Activated CD4-positive, alpha-beta memory T cell treated with anti-CD3 and anti-CD28 coated beads for 36 hours (primary cell): ENCODE measurements at regions of chr1 and their contacts with region 1.

Region 1: GRCh38 chr1:244272471-244273261 is 179.0 kb downstream of the ADSS2 start:
- DNase-seq: peak; percentile 80
- H3K4me3 Mint-ChIP-seq: no peak overlapping the region
- H3K27ac Mint-ChIP-seq: no peak overlapping the region
- H3K4me1 Mint-ChIP-seq: peaks cover 5% of the 10 kb centered on the region
- H3K27me3 Mint-ChIP-seq: peaks cover 1% of the 10 kb centered on the region

Region 2: DNA sequence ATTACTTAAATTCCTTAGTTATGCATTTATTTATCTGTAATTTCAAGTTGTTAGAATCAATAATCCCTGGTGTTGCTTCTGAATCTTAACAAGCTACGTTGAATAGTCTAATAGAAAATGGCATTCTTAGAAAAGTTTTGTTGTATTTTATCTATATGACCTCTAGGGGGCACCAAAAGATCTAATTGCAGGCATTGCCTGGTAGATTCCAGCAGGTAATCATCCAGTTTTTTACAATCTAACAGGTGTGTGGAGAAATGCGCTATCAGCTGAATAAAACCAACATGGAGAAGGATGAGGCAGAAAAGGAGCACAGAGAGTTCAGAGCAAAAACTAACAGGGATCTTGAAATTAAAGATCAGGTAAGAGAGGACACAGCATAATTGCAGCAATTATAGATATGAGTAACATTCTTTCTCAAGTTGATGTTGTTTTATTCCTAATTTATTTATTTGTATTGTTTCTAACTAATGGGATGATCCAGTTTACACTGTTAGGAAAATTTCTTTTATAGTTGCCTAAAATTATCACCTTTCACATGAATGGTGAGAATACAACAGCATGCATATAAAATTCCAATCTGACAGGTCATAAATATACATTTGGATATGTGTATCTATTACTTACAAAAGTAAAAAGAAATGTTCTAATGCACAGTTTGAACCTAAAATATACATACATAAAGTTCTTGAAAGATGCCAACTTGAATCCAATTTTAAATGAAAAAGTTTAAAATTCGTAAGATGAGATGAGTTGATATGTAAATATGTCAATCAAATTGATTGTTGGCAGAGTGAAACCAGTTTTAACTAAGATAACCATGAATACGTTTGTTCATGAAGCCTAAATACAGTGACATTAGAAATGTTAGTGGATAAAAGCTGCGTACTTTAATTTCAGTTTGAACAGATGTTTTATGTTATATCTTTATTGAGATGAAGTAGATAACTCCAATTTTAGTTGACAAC is 928.4 kb before region 1 on chr1:
- CTCF ChIA-PET with region 1: interaction called, 10 read pairs
- POLR2A ChIA-PET with region 1: no interaction called
- intact Hi-C with region 1: loop called (anchors 1 kb)
- DNase-seq: no peak
- H3K4me3 Mint-ChIP-seq: no peak overlapping the region
- H3K27ac Mint-ChIP-seq: no peak overlapping the region
- H3K4me1 Mint-ChIP-seq: peaks cover 2% of the 10 kb centered on the region
- H3K27me3 Mint-ChIP-seq: no peaks in the 10 kb centered on the region

Region 3: DNA sequence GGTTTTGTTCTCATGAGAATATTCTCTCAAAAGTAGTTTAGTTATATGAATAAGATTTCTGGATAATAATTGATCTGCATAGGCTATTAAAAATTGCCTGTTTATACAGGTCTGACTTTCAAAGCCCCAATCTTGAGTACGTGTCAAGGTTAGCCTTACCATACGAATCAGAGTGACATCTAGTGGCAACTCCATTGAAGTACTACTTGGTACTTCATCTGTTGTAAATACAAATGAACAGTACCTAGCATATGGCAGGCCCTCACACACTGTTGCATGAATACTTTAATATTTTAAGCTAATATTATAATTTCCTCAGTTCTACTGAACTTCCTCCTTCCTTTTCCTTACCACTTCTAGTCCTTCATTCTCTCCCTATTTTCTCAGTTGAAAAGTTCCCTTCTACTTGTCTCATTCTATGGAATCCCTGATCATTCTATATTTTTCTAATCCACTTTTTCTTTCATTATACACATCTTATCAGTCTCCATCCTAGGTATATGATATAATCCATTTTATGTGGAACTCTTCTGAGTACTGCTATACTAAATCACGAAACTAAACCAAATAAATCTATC is 523.9 kb before region 1 on chr1:
- CTCF ChIA-PET with region 1: interaction called, 3 read pairs
- POLR2A ChIA-PET with region 1: no interaction called
- intact Hi-C with region 1: loop called (anchors 1 kb)
- DNase-seq: no peak
- H3K4me3 Mint-ChIP-seq: no peak overlapping the region
- H3K27ac Mint-ChIP-seq: no peak overlapping the region
- H3K4me1 Mint-ChIP-seq: peaks cover 34% of the 10 kb centered on the region
- H3K27me3 Mint-ChIP-seq: no peaks in the 10 kb centered on the region

Region 4: GRCh38 chr1:244284641-244285156 is 12.0 kb after region 1 on chr1:
- CTCF ChIA-PET with region 1: interaction called, 10 read pairs
- POLR2A ChIA-PET with region 1: no interaction called
- intact Hi-C with region 1: no loop called
- DNase-seq: no peak
- H3K4me3 Mint-ChIP-seq: no peak overlapping the region
- H3K27ac Mint-ChIP-seq: no peak overlapping the region
- H3K4me1 Mint-ChIP-seq: no peaks in the 10 kb centered on the region
- H3K27me3 Mint-ChIP-seq: peaks cover 5% of the 10 kb centered on the region

Region 5: GRCh38 chr1:244302889-244303613 is 30.4 kb after region 1 on chr1:
- CTCF ChIA-PET with region 1: interaction called, 22 read pairs
- POLR2A ChIA-PET with region 1: no interaction called
- intact Hi-C with region 1: loop called (anchors 1 kb)
- DNase-seq: no peak
- H3K4me3 Mint-ChIP-seq: no peak overlapping the region
- H3K27ac Mint-ChIP-seq: no peak overlapping the region
- H3K4me1 Mint-ChIP-seq: peaks cover 5% of the 10 kb centered on the region
- H3K27me3 Mint-ChIP-seq: no peaks in the 10 kb centered on the region